ENCODE measurements at regions of chr1 and their contacts with region 1.

Region 1: GRCh38 chr1:21368515-21369289 is 71.2 kb upstream of the NBPF3 start:
- DNase-seq: peak; percentile 66
- ATAC-seq: peak; percentile 91
- H3K4me3 ChIP-seq: no peak overlapping the region
- H3K27ac ChIP-seq: no peak overlapping the region
- H3K4me1 ChIP-seq: peaks cover 14% of the 10 kb centered on the region
- H3K27me3 ChIP-seq: no peaks in the 10 kb centered on the region
- CTCF ChIP-seq: peak; percentile 99
- EP300 ChIP-seq: no peak
- POLR2A ChIP-seq: no peak
- RAD21 ChIP-seq: peak; percentile 99

Region 2: GRCh38 chr1:21232044-21232443 is 136.7 kb before region 1 on chr1:
- CTCF ChIA-PET with region 1: interaction called, 53 read pairs
- POLR2A ChIA-PET with region 1: interaction called, 5 read pairs
- in situ Hi-C with region 1: loop called (anchors 5 kb)
- intact Hi-C with region 1: loop called (anchors 1 kb)
- DNase-seq: peak; percentile 56
- ATAC-seq: peak; percentile 79
- H3K4me3 ChIP-seq: no peak overlapping the region
- H3K27ac ChIP-seq: no peak overlapping the region
- H3K4me1 ChIP-seq: peaks cover 6% of the 10 kb centered on the region; the same call in 1 of the 2 replicates
- H3K27me3 ChIP-seq: no peaks in the 10 kb centered on the region
- CTCF ChIP-seq: peak; percentile 87
- EP300 ChIP-seq: no peak
- POLR2A ChIP-seq: no peak
- RAD21 ChIP-seq: peak; percentile 84

Region 3: DNA sequence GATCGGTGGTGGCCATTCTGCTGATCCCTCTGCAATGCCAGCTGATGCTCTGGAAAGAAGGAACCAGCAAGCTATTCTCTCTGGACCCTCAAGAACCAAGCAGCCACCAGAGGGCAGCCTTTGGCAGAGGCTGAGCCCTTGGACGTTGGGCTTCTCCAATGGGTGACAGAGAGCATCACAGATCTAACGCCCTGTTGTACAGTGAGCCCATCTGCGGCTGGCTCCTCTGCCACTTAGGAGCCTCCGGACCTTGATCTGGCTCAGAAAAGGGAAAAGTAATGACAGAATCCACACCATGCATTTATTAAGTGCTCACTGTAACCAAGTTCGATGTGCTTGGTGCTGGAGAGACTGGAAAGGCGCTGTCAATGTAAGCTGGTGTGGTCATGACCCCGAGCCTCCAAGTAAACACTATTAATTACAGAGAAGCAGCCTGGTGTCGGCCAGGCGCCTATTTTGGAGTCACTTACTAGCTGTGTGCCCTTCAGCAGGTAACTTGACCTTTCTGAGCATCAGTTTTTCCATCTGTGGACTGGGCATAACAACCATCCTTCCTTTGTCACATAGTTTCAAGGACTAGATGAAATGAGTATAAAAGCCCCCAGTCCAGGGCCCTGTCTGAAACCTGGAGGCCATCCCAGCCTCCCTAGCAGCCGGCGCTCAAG is 113.3 kb before region 1 on chr1:
- CTCF ChIA-PET with region 1: interaction called, 52 read pairs
- POLR2A ChIA-PET with region 1: interaction called, 8 read pairs
- in situ Hi-C with region 1: loop called (anchors 5 kb)
- intact Hi-C with region 1: loop called (anchors 1 kb)
- DNase-seq: peak; percentile 81
- ATAC-seq: peak; percentile 79
- H3K4me3 ChIP-seq: no peak overlapping the region
- H3K27ac ChIP-seq: no peak overlapping the region
- H3K4me1 ChIP-seq: peaks cover 26% of the 10 kb centered on the region
- H3K27me3 ChIP-seq: no peaks in the 10 kb centered on the region
- CTCF ChIP-seq: peak; percentile 95
- EP300 ChIP-seq: no peak
- POLR2A ChIP-seq: no peak
- RAD21 ChIP-seq: peak; percentile 95

Region 4: DNA sequence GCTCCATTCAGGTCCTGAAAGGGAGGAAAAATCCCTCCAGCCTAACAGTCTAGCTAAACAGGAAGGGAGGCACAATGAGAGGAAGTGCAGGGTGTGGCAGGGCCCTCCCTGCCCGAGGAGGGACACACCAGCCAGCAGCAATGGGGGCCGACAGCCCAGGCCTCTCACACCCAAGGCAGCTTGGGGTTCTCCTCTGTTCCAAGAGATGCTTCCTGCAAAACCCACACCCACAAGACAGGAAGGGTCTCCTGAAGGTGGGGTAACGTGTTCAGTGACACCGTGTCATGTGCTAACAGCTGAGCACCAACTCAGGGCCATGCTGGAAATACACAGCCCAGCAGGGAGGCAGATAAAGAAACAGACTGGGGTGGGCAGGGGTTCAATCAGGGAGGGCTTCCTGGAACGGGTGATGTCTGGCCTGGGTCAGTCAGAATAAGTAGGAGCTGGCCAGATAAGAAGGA is 88.7 kb before region 1 on chr1:
- CTCF ChIA-PET with region 1: no interaction called
- POLR2A ChIA-PET with region 1: no interaction called
- in situ Hi-C with region 1: no loop called
- intact Hi-C with region 1: no loop called
- DNase-seq: no peak
- ATAC-seq: no peak
- H3K4me3 ChIP-seq: no peak overlapping the region
- H3K27ac ChIP-seq: no peak overlapping the region
- H3K4me1 ChIP-seq: peaks cover 28% of the 10 kb centered on the region
- H3K27me3 ChIP-seq: no peaks in the 10 kb centered on the region
- CTCF ChIP-seq: no peak
- EP300 ChIP-seq: no peak
- POLR2A ChIP-seq: no peak
- RAD21 ChIP-seq: no peak

Region 5: GRCh38 chr1:21302747-21303715 is 65.7 kb before region 1 on chr1:
- CTCF ChIA-PET with region 1: interaction called, 26 read pairs
- POLR2A ChIA-PET with region 1: no interaction called
- in situ Hi-C with region 1: loop called (anchors 5 kb)
- intact Hi-C with region 1: loop called (anchors 1 kb)
- DNase-seq: no peak
- ATAC-seq: peak; percentile 78
- H3K4me3 ChIP-seq: no peak overlapping the region
- H3K27ac ChIP-seq: no peak overlapping the region
- H3K4me1 ChIP-seq: no peaks in the 10 kb centered on the region
- H3K27me3 ChIP-seq: no peaks in the 10 kb centered on the region
- CTCF ChIP-seq: peak; percentile 65
- EP300 ChIP-seq: no peak
- POLR2A ChIP-seq: no peak
- RAD21 ChIP-seq: peak; percentile 72

Region 6: GRCh38 chr1:21308847-21309652 is 59.7 kb before region 1 on chr1:
- CTCF ChIA-PET with region 1: no interaction called
- POLR2A ChIA-PET with region 1: no interaction called
- in situ Hi-C with region 1: loop called (anchors 5 kb)
- intact Hi-C with region 1: no loop called
- DNase-seq: no peak
- ATAC-seq: no peak
- H3K4me3 ChIP-seq: no peak overlapping the region
- H3K27ac ChIP-seq: no peak overlapping the region
- H3K4me1 ChIP-seq: peaks cover 33% of the 10 kb centered on the region
- H3K27me3 ChIP-seq: no peaks in the 10 kb centered on the region
- CTCF ChIP-seq: no peak
- EP300 ChIP-seq: no peak
- POLR2A ChIP-seq: no peak
- RAD21 ChIP-seq: no peak

Region 7: GRCh38 chr1:21490774-21491553 is 122.3 kb after region 1 on chr1:
- CTCF ChIA-PET with region 1: interaction called, 14 read pairs
- POLR2A ChIA-PET with region 1: no interaction called
- in situ Hi-C with region 1: loop called (anchors 5 kb)
- intact Hi-C with region 1: no loop called
- DNase-seq: peak; percentile 41
- ATAC-seq: peak; percentile 91
- H3K4me3 ChIP-seq: no peak overlapping the region
- H3K27ac ChIP-seq: no peak overlapping the region
- H3K4me1 ChIP-seq: 0 out of 2 replicates have a peak, but pooled peaks cover 6% of the 10 kb centered on the region
- H3K27me3 ChIP-seq: peaks cover 0 to 3% of the 10 kb centered on the region in 2 experiments; a peak in 1 of 5 replicates
- CTCF ChIP-seq: peak; percentile 84
- EP300 ChIP-seq: no peak
- POLR2A ChIP-seq: no peak
- RAD21 ChIP-seq: peak; percentile 60; the same call in 1 of the 2 replicates

Measured in HepG2 (cell line).